HCT116 (cell line): ENCODE measurements at regions of chr6 and their contacts with region 1.

Region 1: DNA sequence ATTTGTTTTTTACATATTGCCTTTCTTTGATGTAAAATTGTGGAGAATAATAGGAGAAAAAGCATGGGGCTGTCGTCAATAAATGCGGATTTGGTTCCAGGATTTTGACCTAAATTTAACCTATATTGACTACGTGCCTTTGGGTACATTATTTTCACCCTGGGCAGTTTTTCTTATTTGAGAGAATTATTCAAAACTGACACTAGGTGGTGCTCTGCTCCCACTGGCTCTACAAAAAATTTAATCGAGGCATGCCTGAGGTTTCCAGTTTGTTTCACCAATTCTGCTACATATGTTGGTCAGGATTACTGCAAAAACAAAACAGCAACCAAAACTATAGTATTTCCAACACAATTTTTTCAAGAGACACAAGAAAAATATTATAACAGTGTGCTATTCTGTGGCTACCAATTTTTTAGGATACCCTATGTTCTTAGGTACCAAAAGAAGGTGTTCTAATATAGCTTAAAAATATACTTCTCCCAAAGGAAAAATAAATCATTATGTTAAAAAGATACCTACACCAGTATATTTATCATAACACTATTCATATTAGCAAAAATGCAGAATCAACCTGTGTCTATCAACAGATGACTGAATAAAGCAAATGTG is 48.6 kb upstream of the FABP7 start:
- DNase-seq: no peak
- ATAC-seq: peak; percentile 65
- H3K4me3 ChIP-seq: no peak overlapping the region
- H3K27ac ChIP-seq: no peak overlapping the region
- H3K4me1 ChIP-seq: no peaks in the 10 kb centered on the region
- H3K27me3 ChIP-seq: no peaks in the 10 kb centered on the region
- CTCF ChIP-seq: peak; percentile 54 to 79 (median 78); a peak in 5 of 6 replicates
- POLR2A ChIP-seq: no peak
- RAD21 ChIP-seq: peak; percentile 88

Region 2: DNA sequence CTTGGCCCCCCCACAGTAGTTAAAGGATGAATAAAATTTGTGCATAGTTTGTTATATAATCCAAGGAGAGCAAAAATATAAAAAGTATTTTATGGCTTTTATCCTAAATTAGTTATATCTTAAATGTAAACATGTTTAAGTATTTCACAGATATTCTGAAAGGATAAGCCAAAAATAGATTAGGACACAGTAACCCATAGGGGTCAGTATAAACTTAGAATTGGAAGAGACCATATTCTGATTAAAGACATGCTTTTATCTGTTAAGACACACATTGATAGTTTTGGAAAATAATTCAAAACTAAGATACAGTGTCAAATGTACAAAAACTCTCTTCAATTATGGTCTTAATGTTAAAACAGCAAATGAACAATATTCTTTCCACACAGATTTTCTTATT is 254.8 kb before region 1 on chr6:
- CTCF ChIA-PET with region 1: no interaction called
- POLR2A ChIA-PET with region 1: no interaction called
- RAD21 ChIA-PET with region 1: no interaction called
- intact Hi-C with region 1: loop called (anchors 5 kb)
- DNase-seq: no peak
- ATAC-seq: no peak
- H3K4me3 ChIP-seq: no peak overlapping the region
- H3K27ac ChIP-seq: no peak overlapping the region
- H3K4me1 ChIP-seq: peaks cover 0 to 4% of the 10 kb centered on the region in 2 experiments; a peak in 1 of 4 replicates
- H3K27me3 ChIP-seq: no peaks in the 10 kb centered on the region
- CTCF ChIP-seq: peak; percentile 33 to 77 (median 61); a peak in 5 of 6 replicates
- POLR2A ChIP-seq: no peak
- RAD21 ChIP-seq: peak; percentile 73

Region 3: DNA sequence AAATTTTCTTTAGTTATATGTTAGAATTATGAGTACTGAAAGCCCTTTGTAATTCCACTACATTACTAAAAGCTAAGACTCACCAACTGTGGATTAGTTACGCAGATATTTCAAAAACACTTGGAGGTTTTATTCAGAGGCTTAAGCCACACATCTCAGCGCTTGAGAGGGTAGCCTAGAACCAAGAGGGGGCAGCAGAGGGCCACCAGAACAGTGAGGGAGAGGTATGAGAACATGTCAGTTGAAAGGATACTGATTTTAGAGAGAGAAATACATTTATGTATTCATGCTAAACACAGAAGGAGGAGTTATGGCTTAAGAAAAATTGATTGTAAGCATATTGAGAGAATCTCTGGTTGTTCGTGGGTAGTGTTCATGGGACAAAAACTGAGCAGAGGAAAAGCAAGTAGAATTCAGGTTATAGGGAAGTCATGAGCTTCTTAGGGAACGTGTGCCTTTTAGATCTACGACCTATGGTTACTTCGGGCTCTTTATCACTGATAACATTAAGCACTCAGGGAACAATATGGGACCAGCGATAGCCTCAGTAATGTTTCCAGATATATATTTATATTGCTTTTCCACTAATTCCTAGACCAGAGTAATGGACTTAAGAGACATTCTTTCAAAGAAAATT is 238.8 kb before region 1 on chr6:
- CTCF ChIA-PET with region 1: interaction called, 33 read pairs
- POLR2A ChIA-PET with region 1: no interaction called
- RAD21 ChIA-PET with region 1: no interaction called
- intact Hi-C with region 1: loop called (anchors 1 kb)
- DNase-seq: peak; percentile 62
- ATAC-seq: peak; percentile 100
- H3K4me3 ChIP-seq: no peak overlapping the region
- H3K27ac ChIP-seq: no peak overlapping the region
- H3K4me1 ChIP-seq: no peaks in the 10 kb centered on the region
- H3K27me3 ChIP-seq: no peaks in the 10 kb centered on the region
- CTCF ChIP-seq: peak; percentile 88 to 97 (median 92)
- POLR2A ChIP-seq: no peak
- RAD21 ChIP-seq: peak; percentile 91

Region 4: DNA sequence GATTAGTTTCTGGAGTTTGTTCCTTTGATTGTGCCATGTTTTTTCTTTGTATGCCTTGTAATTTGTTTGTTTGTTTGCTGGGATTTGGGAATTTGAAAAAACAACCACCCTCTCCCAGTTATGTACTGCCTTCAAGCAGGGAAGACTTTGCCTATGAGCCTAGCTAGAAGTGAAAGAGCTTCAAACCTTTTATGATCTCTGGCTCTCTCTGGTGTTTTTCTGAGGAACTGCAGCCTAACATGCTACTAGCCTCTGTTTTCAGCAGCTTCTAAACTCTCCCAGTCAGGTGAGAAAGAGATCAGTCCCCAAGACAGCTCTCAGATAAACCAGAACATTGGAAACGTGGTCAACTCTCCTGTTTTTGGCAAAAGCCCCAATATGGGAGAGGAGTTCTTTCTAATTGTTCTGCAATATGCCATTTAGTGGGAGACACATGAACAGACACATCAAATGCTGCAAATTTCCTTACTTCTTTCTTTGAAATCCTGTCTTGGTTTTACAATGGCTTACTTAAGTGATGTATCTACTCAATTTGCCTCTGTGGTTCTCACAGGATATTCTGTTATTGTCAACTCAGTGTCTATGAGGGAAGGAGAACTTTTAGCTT is 200.3 kb before region 1 on chr6:
- CTCF ChIA-PET with region 1: interaction called, 18 read pairs
- POLR2A ChIA-PET with region 1: no interaction called
- RAD21 ChIA-PET with region 1: no interaction called
- intact Hi-C with region 1: no loop called
- DNase-seq: peak; percentile 62
- ATAC-seq: peak; percentile 98
- H3K4me3 ChIP-seq: no peak overlapping the region
- H3K27ac ChIP-seq: no peak overlapping the region
- H3K4me1 ChIP-seq: no peaks in the 10 kb centered on the region
- H3K27me3 ChIP-seq: no peaks in the 10 kb centered on the region
- CTCF ChIP-seq: peak; percentile 71 to 90 (median 90)
- POLR2A ChIP-seq: no peak
- RAD21 ChIP-seq: peak; percentile 84

Region 5: DNA sequence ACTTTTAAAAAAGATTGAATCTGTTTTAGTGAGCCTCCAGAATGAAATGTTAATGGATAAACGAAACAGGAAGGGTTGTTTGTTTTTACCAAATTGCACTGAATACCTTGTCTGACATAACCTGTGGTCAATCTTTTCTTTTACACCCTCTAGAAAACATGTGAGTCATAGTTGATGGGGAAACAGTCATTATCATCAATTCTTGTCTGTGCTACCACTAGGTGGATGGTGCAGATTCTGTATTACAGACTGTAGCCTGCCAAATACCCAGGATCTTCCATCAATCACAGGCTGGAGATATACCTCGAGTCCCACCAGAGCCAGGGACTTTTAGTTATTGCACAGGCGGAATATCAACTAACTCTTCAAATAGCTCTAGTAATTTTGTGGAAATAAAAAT is 150.1 kb before region 1 on chr6:
- CTCF ChIA-PET with region 1: no interaction called
- POLR2A ChIA-PET with region 1: no interaction called
- RAD21 ChIA-PET with region 1: no interaction called
- intact Hi-C with region 1: loop called (anchors 10 kb)
- DNase-seq: peak; percentile 15
- ATAC-seq: peak; percentile 85
- H3K4me3 ChIP-seq: no peak overlapping the region
- H3K27ac ChIP-seq: no peak overlapping the region
- H3K4me1 ChIP-seq: peaks cover 0 to 6% of the 10 kb centered on the region in 2 experiments; a peak in 1 of 4 replicates
- H3K27me3 ChIP-seq: no peaks in the 10 kb centered on the region
- CTCF ChIP-seq: peak; percentile 13 to 45 (median 44); a peak in 5 of 6 replicates
- POLR2A ChIP-seq: no peak
- RAD21 ChIP-seq: peak; percentile 30

Region 6: GRCh38 chr6:122609856-122610689 is 120.8 kb before region 1 on chr6 and contains the start of gene PKIB:
- CTCF ChIA-PET with region 1: interaction called, 9 read pairs
- POLR2A ChIA-PET with region 1: no interaction called
- RAD21 ChIA-PET with region 1: no interaction called
- intact Hi-C with region 1: loop called (anchors 2 kb)
- DNase-seq: peak; percentile 75
- ATAC-seq: peak; percentile 94
- H3K4me3 ChIP-seq: peak within 1 kb of the TSS; percentile 55 to 79
- H3K27ac ChIP-seq: peak within 1 kb of the TSS; percentile 44
- H3K4me1 ChIP-seq: peaks cover 8 to 22% of the 10 kb centered on the region in 2 experiments; a peak in 3 of 4 replicates
- H3K27me3 ChIP-seq: no peaks in the 10 kb centered on the region
- CTCF ChIP-seq: peak in 2 of 3 experiments; percentile 44 to 51; a peak in 5 of 6 replicates
- POLR2A ChIP-seq: peak; percentile 38
- RAD21 ChIP-seq: peak; percentile 53
- total RNA-seq, gene PKIB: 24.0 TPM

Region 7: DNA sequence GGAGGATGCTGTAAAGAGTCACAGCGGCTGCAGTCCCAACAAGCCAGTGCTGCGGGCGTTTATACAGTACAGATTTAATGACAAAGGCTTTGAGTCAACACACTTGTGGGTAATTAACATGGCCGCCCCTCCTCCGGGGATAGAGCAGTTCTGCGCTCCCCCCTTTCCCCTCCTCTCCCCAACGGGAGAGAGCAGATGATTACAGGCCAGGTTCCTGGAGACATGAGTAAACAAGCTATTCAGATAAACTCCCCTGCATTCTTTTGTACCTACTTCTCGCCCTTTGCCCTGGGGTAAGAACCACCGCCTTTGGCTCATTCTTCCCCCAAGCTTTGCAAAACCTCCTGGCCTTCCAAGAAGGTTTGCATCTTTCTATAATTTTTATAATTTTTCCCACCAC is 25.0 kb after region 1 on chr6:
- CTCF ChIA-PET with region 1: no interaction called
- POLR2A ChIA-PET with region 1: no interaction called
- RAD21 ChIA-PET with region 1: no interaction called
- intact Hi-C with region 1: no loop called
- DNase-seq: no peak
- ATAC-seq: no peak
- H3K4me3 ChIP-seq: no peak overlapping the region
- H3K27ac ChIP-seq: no peak overlapping the region
- H3K4me1 ChIP-seq: no peaks in the 10 kb centered on the region
- H3K27me3 ChIP-seq: no peaks in the 10 kb centered on the region
- CTCF ChIP-seq: no peak
- POLR2A ChIP-seq: no peak
- RAD21 ChIP-seq: no peak

Region 8: GRCh38 chr6:123316733-123317323 is 585.9 kb after region 1 on chr6:
- CTCF ChIA-PET with region 1: no interaction called
- POLR2A ChIA-PET with region 1: no interaction called
- RAD21 ChIA-PET with region 1: no interaction called
- intact Hi-C with region 1: loop called (anchors 5 kb)
- DNase-seq: no peak
- ATAC-seq: no peak
- H3K4me3 ChIP-seq: no peak overlapping the region
- H3K27ac ChIP-seq: no peak overlapping the region
- H3K4me1 ChIP-seq: no peaks in the 10 kb centered on the region
- H3K27me3 ChIP-seq: peaks cover 12% of the 10 kb centered on the region
- CTCF ChIP-seq: peak; percentile 28 to 47 (median 43); a peak in 4 of 6 replicates
- POLR2A ChIP-seq: no peak
- RAD21 ChIP-seq: peak; percentile 55